IMR-90 (cell line): ENCODE measurements at regions of chr6 and their contacts with region 1.

Region 1: DNA sequence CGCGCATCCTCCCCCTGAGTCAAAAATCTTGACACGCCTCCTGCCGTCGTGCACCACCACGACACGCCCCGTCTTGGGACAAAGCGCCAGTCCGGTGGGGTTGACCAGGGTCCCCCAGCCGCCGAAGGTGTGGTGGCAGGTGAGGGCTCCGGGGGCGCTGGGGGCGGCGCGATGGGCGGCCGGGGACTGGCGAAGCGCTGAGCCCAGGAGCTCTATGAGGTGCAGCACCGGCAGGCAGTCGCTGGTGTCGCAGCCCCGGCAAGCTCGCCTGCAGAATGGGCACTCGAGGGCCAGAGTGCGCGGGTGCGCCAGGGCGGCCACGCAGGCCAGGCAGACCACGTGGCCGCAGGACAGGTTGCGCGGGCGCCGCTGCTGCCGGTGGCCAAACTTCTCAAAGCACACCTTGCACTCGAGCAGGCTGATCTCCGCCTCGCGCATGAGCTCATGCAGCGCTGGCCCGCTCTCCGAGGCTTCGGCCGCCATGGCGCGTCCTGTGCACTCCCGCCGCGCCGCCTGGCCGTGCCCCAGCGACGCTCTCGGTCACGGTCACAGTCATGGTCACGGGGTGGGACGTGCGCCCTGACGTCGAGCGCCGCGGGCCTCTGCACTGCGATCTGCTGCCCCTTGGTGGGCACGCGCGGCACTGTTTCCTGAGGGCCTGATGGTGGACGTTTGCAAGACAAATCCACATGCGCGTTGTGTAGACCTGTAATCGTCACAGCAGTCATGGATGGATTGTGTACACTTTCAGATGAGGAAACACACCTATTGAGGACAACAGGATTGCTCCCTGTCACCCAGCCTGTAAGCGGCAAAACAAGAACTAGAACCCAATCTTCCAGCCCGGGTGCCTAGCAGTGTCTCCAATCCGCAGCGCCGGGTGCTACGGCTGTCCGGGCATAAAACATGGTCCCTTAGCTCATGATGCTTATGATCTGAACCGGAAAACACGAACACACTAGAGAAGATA is at the start of gene NHLRC1:
- DNase-seq: peak; percentile 82
- ATAC-seq: peak; percentile 100
- H3K4me3 ChIP-seq: peak within 1 kb of the TSS; percentile 74
- H3K27ac ChIP-seq: peak within 1 kb of the TSS; percentile 27; the same call in 1 of the 2 replicates
- H3K4me1 ChIP-seq: peaks cover 6% of the 10 kb centered on the region
- H3K27me3 ChIP-seq: no peaks in the 10 kb centered on the region
- CTCF ChIP-seq: peak; percentile 93
- POLR2A ChIP-seq: no peak
- RAD21 ChIP-seq: peak; percentile 93
- total RNA-seq, gene NHLRC1: 0.83 and 1.1 TPM in 2 replicates

Region 2: DNA sequence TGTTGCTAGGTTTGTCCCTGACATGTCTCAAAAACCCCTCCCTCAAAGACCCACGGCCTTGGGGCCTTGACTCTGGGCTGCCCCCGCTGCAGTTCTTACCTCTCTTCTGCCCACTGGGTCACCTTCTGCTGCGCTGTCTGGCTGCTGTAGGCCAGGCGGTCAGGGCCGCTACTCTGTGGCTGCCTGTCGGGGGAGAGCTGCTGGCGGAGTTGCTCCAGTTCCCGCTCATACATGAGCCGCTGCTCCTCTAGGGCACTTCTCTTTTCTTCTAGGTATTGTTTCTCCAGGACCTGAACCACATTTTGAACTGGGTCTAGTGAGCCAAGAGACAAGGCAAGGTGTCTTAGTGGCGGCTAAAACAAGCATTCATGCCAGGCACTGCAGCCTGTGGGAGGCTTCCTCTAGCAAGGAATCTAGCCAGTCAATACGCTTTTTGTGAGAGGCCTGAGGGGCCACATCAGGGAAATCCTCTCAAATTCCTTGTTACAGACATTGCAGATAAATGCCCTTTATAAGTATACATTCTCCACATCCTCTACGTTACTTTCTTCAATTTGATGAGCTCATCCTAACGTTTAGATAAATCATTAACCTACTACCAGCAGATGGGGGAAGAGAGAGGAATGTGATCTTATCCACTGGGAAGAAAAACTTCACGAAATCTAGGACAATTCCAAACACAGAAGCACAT is 305.3 kb before region 1 on chr6:
- CTCF ChIA-PET with region 1: interaction called, 7 read pairs
- POLR2A ChIA-PET with region 1: no interaction called
- dilution Hi-C with region 1: no loop called
- in situ Hi-C with region 1: no loop called
- intact Hi-C with region 1: loop called (anchors 1 kb)
- DNase-seq: peak; percentile 75
- ATAC-seq: peak; percentile 90
- H3K4me3 ChIP-seq: no peak overlapping the region
- H3K27ac ChIP-seq: peak overlapping the region; percentile 41; the same call in 1 of the 2 replicates
- H3K4me1 ChIP-seq: peaks cover 6% of the 10 kb centered on the region
- H3K27me3 ChIP-seq: no peaks in the 10 kb centered on the region
- CTCF ChIP-seq: peak; percentile 48
- POLR2A ChIP-seq: no peak
- RAD21 ChIP-seq: peak; percentile 55

Region 3: GRCh38 chr6:17831135-17831534 is 291.3 kb before region 1 on chr6:
- CTCF ChIA-PET with region 1: no interaction called
- POLR2A ChIA-PET with region 1: no interaction called
- dilution Hi-C with region 1: no loop called
- in situ Hi-C with region 1: loop called (anchors 5 kb)
- intact Hi-C with region 1: loop called (anchors 5 kb)
- DNase-seq: peak; percentile 83
- ATAC-seq: no peak
- H3K4me3 ChIP-seq: no peak overlapping the region
- H3K27ac ChIP-seq: no peak overlapping the region
- H3K4me1 ChIP-seq: peaks cover 3% of the 10 kb centered on the region
- H3K27me3 ChIP-seq: no peaks in the 10 kb centered on the region
- CTCF ChIP-seq: no peak
- POLR2A ChIP-seq: no peak
- RAD21 ChIP-seq: no peak

Region 4: DNA sequence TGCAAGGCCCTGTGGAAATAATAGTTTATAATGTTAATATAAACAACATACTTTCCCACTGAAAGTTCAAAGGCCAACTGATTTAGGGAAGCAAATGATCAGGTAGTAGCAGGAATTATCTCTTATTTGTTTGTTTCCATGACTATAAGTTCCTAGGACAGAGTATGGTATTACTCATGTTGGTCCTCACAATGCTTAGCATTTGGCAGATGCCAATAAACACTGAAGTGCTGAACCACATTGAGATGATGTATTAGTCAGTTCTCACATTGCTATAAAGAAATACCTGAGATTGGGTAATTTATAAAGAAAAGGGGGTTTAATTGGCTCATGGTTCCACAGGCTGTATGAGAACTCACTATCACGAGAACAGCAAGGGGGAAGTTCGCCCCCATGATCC is 286.1 kb before region 1 on chr6:
- CTCF ChIA-PET with region 1: no interaction called
- POLR2A ChIA-PET with region 1: no interaction called
- dilution Hi-C with region 1: no loop called
- in situ Hi-C with region 1: loop called (anchors 5 kb)
- intact Hi-C with region 1: loop called (anchors 5 kb)
- DNase-seq: no peak
- ATAC-seq: no peak
- H3K4me3 ChIP-seq: no peak overlapping the region
- H3K27ac ChIP-seq: no peak overlapping the region
- H3K4me1 ChIP-seq: peaks cover under 1% of the 10 kb centered on the region; the same call in 1 of the 2 replicates
- H3K27me3 ChIP-seq: no peaks in the 10 kb centered on the region
- CTCF ChIP-seq: no peak
- POLR2A ChIP-seq: no peak
- RAD21 ChIP-seq: no peak

Region 5: DNA sequence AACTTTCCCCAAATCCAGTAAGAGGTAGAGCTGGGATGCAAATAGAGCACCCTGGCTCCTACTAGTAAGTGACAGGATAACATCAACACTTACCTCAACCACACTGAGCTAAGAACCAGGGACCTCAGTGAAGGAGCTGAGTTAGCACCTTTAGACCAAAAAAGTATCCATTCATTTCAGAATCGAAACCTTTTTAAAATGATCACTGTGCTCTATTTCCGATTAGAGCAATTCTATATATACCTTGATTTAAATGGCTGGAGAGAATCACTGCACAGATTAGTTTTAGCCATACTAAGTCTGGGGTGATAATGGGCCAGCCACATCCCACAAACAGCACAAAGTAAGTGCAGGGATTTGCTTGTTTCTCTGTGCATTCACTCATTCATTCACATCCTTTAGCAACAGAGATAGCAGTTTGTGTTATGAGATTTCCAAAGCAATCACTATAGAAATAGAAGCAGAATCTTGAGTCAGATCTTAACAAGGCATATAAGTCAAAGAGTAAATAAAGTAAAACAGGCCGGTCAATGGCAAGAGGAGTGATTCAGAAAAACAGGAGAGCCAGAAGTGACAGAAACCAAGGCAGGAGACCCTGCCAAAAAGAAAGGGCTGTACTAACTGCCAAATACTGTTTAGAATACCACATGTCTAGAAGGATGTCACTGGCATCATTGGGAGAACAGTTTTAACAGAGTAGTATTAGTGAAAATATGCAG is 271.2 kb before region 1 on chr6:
- CTCF ChIA-PET with region 1: interaction called, 3 read pairs
- POLR2A ChIA-PET with region 1: no interaction called
- dilution Hi-C with region 1: no loop called
- in situ Hi-C with region 1: no loop called
- intact Hi-C with region 1: loop called (anchors 5 kb)
- DNase-seq: peak; percentile 55
- ATAC-seq: peak; percentile 62
- H3K4me3 ChIP-seq: no peak overlapping the region
- H3K27ac ChIP-seq: peak overlapping the region; percentile 68; the same call in 1 of the 2 replicates
- H3K4me1 ChIP-seq: peaks cover 14% of the 10 kb centered on the region
- H3K27me3 ChIP-seq: no peaks in the 10 kb centered on the region
- CTCF ChIP-seq: no peak
- POLR2A ChIP-seq: no peak
- RAD21 ChIP-seq: no peak

Region 6: DNA sequence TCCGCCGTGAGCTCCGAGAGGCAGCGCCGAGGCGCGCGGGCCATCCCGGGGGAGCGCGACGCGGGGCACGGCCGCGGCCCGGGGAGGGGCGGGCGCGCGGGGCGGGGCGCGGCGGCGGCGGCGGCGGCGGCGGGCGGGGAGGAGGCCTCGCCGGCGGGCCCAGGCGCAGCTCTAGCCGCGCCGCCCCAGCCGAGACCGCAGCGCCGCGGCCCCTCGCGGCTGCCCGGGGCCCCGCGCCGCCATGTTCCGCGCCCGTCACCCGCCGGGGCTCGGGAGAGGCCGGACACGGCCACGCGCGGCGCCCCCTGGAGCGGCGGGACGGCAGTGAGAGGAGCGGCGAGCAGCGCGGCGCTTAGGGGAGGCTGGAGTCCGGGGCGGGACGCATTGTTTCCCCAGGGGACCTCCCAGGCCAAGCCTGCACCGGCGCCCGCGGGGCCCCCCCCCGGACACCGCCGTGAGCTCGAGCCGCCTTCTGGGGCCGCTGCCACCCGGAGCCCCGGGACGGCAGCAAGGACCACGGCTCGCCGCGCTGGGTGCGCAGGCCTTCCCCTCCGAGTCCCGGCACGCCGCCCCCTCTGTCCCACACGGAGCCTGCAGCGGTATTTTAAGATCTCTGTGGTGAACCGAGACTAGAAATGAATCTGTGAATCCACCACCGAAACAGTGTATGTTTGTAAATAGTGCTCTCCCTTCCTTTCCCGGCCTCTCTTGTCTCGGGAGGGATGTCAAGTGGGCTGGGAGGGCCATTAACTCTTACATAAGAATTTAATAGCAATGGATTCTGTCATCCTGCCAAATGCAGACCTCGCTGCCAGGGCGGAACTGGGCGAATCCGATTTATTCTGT is 134.6 kb before region 1 on chr6 and contains the start of gene KIF13A:
- CTCF ChIA-PET with region 1: interaction called, 4 read pairs
- POLR2A ChIA-PET with region 1: no interaction called
- dilution Hi-C with region 1: no loop called
- in situ Hi-C with region 1: loop called (anchors 5 kb)
- intact Hi-C with region 1: loop called (anchors 1 kb)
- DNase-seq: peak; percentile 59
- ATAC-seq: peak; percentile 87
- H3K4me3 ChIP-seq: peak within 1 kb of the TSS; percentile 84
- H3K27ac ChIP-seq: peak within 1 kb of the TSS; percentile 85
- H3K4me1 ChIP-seq: peaks cover 10% of the 10 kb centered on the region
- H3K27me3 ChIP-seq: no peaks in the 10 kb centered on the region
- CTCF ChIP-seq: peak; percentile 41
- POLR2A ChIP-seq: no peak
- RAD21 ChIP-seq: peak; percentile 35
- total RNA-seq, gene KIF13A: 51.8 and 53.0 TPM in 2 replicates